Sigmoid colon (tissue), 7 donors: ENCODE measurements at regions of chr7 and their contacts with region 1.

Region 1: DNA sequence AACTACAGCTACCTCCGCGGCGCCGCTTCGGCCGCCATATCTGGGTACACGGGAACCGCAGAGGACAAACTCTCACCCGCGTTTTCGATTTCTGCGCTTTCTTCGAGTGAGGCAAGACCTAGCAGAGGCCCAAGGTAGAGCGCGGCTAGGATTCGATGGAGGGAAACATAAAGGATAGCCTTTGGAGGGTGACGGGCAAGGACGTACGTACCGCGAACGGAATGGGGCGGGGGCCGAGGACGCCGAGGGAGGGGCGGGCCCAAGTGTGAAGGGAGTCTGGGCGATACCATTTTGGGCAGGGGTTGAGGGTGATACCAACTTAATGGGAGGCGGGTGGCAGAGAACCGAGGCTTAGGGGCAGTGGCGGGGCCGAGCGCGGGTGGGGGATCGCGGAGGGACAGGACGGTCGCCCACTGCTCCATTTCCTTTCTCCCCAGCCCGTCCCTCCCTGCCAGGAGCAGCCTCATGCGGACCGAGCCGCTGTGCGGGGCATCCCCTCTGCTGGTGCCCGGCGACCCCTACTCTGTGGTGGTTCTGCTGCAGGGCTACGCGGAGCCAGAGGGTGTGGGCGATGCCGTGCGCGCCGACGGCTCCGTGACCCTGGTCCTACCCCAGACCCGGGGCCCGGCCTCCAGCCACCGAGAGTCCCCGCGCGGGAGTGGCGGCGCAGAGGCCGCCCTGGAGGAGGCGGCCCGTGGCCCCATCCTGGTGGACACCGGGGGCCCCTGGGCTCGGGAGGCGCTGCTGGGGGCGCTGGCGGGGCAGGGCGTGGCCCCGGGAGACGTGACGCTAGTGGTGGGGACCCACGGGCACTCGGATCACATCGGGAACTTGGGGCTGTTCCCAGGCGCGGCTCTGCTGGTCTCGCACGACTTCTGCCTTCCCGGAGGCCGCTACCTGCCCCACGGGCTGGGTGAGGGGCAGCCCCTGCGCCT is at the start of gene MBLAC1:
- DNase-seq: peak; percentile 94
- H3K4me3 ChIP-seq: peak within 1 kb of the TSS; percentile 64 to 88 (median 80)
- H3K27ac ChIP-seq: peak within 1 kb of the TSS; percentile 91 to 95 (median 94)
- H3K4me1 ChIP-seq: peaks cover 0 to 33% (median 22%) of the 10 kb centered on the region in 4 donors
- H3K27me3 ChIP-seq: no peaks in the 10 kb centered on the region
- CTCF ChIP-seq: no peak
- EP300 ChIP-seq: no peak
- POLR2A ChIP-seq: peak; percentile 13 to 81
- total RNA-seq, gene MBLAC1: 2.5 to 5.8 (median 4.3) TPM

Region 2: DNA sequence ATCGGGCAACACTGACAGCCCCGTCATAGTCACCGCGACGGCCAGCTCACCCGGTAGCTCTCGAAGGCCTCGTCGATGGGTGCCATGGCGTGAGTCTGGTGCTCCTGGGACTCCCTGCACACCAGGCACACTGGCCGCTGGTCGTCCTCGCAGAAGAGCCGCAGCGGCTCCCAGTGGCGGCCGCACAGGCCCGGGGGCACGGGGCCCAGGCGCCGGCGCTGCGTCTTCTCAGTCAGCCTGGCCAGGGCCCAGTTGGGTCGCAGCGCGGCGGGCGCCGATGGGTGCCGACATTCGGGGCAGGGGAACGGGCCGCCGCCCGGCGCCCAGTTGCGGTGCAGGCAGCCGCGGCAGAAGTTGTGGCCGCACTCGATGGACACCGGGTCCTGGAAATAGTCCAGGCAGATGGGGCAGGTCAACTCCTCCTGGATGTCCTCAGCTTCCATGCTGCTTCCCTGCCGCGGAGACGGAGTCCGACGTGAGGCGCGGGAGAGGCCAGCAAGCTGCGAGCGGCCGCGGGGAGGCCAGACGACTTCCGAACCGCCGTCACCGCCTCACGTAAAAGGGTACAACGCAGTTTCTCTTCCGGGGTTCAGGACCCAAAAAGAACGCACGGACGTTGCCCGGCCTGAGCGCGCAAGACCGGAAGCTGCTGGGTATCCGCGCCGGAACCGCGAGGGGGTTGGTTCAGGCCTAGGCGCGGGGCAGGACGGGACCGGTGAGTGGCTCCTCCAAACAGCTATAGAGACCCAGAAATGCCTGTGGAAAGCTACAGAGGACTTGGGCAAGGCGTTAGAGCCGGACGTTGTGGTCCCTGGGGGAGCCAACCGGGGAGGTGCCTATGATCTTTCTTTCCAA is 208.0 kb before region 1 on chr7 and contains the start of gene TRIM4:
- intact Hi-C with region 1: loop called (anchors 5 kb)
- DNase-seq: peak; percentile 97
- H3K4me3 ChIP-seq: peak within 1 kb of the TSS; percentile 89 to 99 (median 94)
- H3K27ac ChIP-seq: peak within 1 kb of the TSS; percentile 97 to 99 (median 98)
- H3K4me1 ChIP-seq: peaks cover 0 to 44% (median 41%) of the 10 kb centered on the region in 4 donors
- H3K27me3 ChIP-seq: no peaks in the 10 kb centered on the region
- CTCF ChIP-seq: peak in 2 of 4 experiments; percentile 6 to 23
- EP300 ChIP-seq: peak in 1 of 4 donors; percentile 50
- POLR2A ChIP-seq: peak; percentile 86
- total RNA-seq, gene TRIM4: 21.9 to 33.2 (median 29.6) TPM

Region 3: GRCh38 chr7:99990460-99990852 is 136.7 kb before region 1 on chr7:
- intact Hi-C with region 1: loop called (anchors 5 kb)
- DNase-seq: no peak
- H3K4me3 ChIP-seq: peak overlapping the region in 1 of 4 donors; percentile 29
- H3K27ac ChIP-seq: peak overlapping the region in 1 of 4 donors; percentile 35
- H3K4me1 ChIP-seq: peaks cover 0 to 17% (median 6%) of the 10 kb centered on the region in 4 donors
- H3K27me3 ChIP-seq: no peaks in the 10 kb centered on the region
- CTCF ChIP-seq: no peak
- EP300 ChIP-seq: no peak
- POLR2A ChIP-seq: no peak

Region 4: GRCh38 chr7:100088621-100089457 is 38.4 kb before region 1 on chr7 and contains the start of gene COPS6:
- intact Hi-C with region 1: loop called (anchors 2 kb)
- DNase-seq: peak; percentile 91
- H3K4me3 ChIP-seq: peak within 1 kb of the TSS; percentile 54 to 91 (median 71)
- H3K27ac ChIP-seq: peak within 1 kb of the TSS; percentile 86 to 94 (median 88)
- H3K4me1 ChIP-seq: peaks cover 0 to 57% (median 51%) of the 10 kb centered on the region in 4 donors
- H3K27me3 ChIP-seq: no peaks in the 10 kb centered on the region
- CTCF ChIP-seq: no peak
- EP300 ChIP-seq: no peak
- POLR2A ChIP-seq: peak; percentile 48 to 62
- total RNA-seq, gene COPS6: 58.4 to 87.4 (median 68.4) TPM

Region 5: DNA sequence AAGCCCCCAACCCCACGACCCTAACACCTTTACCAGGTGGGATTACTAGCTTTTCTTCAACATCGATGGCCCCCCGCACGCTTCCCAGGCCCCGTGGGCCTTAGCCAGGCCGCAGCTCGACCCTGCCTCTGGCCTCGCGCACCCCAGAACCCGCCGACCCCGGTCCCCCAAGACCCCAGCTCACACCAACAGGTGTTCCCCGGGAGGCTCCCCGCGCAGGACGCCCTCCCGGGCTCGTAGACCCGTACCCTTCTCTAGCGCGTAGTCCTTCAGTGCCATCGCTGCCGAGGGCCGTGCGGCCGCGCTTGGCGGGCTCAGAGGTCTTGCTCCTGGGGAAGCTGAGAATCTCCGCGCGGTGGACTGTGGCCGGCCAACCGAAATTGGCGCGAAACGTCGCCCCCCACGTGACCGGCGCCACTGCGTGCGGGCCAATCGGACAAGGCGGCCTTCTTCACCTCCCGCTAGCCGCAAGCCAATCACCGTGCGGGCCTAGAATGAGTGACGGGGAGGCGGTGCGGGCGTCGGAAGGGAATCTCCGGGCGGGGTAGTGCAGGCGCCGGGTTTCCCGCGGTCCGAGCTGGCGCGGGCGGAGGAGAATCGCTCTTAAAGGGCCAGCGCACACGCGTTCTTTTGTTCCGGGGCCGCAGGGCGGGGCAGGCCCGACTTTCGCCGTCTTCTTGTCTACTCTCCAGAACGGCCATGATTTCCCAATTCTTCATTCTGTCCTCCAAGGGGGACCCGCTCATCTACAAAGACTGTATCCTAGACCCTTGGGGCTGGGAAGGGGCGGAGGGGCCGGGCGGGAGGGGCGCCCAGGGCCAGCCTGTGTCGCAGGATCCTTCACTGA is 26.0 kb before region 1 on chr7 and contains the starts of genes AP4M1 and MCM7:
- intact Hi-C with region 1: loop called (anchors 2 kb)
- DNase-seq: peak; percentile 100
- H3K4me3 ChIP-seq: peak within 1 kb of the TSS; percentile 66 to 89 (median 82)
- H3K27ac ChIP-seq: peak within 1 kb of the TSS; percentile 95 to 99 (median 97)
- H3K4me1 ChIP-seq: peaks cover 0 to 41% (median 25%) of the 10 kb centered on the region in 4 donors
- H3K27me3 ChIP-seq: no peaks in the 10 kb centered on the region
- CTCF ChIP-seq: no peak
- EP300 ChIP-seq: no peak
- POLR2A ChIP-seq: no peak
- total RNA-seq, gene AP4M1: 18.1 to 26.6 (median 20.8) TPM
- total RNA-seq, gene MCM7: 30.7 to 43.6 (median 37.4) TPM